ENCODE measurements at regions of chr7 and their contacts with region 1.

Region 1: GRCh38 chr7:75727881-75728592 is 10.7 kb downstream of the HIP1 start:
- DNase-seq: peak; percentile 57 to 94
- H3K4me3 ChIP-seq: no peak overlapping the region; the same call in 1 of the 2 replicates
- H3K27ac ChIP-seq: peak overlapping the region; percentile 11; the same call in 1 of the 2 replicates
- H3K4me1 ChIP-seq: peaks cover 18% of the 10 kb centered on the region
- H3K27me3 ChIP-seq: no peaks in the 10 kb centered on the region
- CTCF ChIP-seq: no peak

Region 2: DNA sequence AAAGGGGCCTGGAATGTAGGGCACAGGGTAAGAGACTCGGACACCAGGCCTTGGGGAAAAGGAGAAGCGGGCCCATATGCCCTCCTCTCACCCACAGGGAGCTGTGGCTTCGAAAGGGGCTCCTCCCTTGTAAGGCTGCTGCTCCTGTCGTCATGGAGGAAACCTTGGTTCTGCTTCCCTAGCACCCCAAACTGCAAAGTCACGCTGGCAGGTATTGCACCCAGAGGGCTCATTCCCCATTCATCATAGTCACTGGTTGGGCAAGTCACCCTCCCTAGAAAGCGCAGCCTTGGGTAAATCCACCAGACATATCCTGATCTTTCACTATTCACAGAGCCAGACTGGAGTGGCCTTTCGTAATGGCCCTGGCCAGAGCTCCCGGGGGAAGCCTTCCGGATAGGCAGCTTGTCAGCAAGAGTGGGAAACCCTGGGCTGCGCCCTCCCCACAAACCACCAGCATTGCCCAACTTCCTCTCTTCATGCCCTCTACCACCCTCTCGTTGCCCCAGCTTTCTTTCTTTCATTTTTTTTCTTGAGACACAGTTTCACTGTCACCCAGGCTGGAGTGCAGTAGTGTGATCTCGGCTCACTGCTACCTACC is 110.3 kb before region 1 on chr7:
- CTCF ChIA-PET with region 1: no interaction called
- POLR2A ChIA-PET with region 1: no interaction called
- intact Hi-C with region 1: loop called (anchors 5 kb)
- DNase-seq: peak; percentile 89 to 99
- H3K4me3 ChIP-seq: peak overlapping the region; percentile 7; the same call in 1 of the 2 replicates
- H3K27ac ChIP-seq: peak overlapping the region; percentile 96
- H3K4me1 ChIP-seq: peaks cover 27% of the 10 kb centered on the region
- H3K27me3 ChIP-seq: no peaks in the 10 kb centered on the region
- CTCF ChIP-seq: no peak

Region 3: GRCh38 chr7:75642810-75643486 is 85.1 kb before region 1 on chr7:
- CTCF ChIA-PET with region 1: no interaction called
- POLR2A ChIA-PET with region 1: interaction called, 15 read pairs
- intact Hi-C with region 1: no loop called
- DNase-seq: peak; percentile 34 to 62
- H3K4me3 ChIP-seq: no peak overlapping the region
- H3K27ac ChIP-seq: no peak overlapping the region
- H3K4me1 ChIP-seq: 0 out of 2 replicates have a peak, but pooled peaks cover 8% of the 10 kb centered on the region
- H3K27me3 ChIP-seq: no peaks in the 10 kb centered on the region
- CTCF ChIP-seq: peak; percentile 94

Region 4: DNA sequence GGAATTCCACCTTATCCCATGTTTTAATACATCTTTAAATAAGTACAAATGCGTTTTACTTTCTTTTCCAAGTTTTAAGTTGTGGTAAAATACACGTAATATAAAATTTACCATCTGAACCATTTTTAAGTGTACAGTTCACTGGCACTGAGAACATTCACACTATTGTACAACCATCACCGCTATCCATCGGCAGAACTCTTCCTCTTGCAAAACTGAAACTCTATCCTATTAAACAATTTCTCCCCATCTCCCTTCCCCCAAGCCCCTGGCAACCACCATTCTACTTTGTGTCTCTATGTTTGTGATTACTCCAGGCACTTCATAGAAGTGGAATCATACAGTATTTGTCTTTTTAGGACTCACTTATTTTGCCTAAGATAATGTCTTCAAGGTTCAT is 23.1 kb before region 1 on chr7:
- CTCF ChIA-PET with region 1: interaction called, 17 read pairs
- POLR2A ChIA-PET with region 1: no interaction called
- intact Hi-C with region 1: no loop called
- DNase-seq: no peak
- H3K4me3 ChIP-seq: no peak overlapping the region
- H3K27ac ChIP-seq: no peak overlapping the region
- H3K4me1 ChIP-seq: no peaks in the 10 kb centered on the region
- H3K27me3 ChIP-seq: no peaks in the 10 kb centered on the region
- CTCF ChIP-seq: no peak

Region 5: GRCh38 chr7:75738987-75739795 is 11.2 kb after region 1 on chr7:
- CTCF ChIA-PET with region 1: no interaction called
- POLR2A ChIA-PET with region 1: interaction called, 12 read pairs
- intact Hi-C with region 1: no loop called
- DNase-seq: peak; percentile 89 to 100
- H3K4me3 ChIP-seq: peak overlapping the region; percentile 88
- H3K27ac ChIP-seq: no peak overlapping the region
- H3K4me1 ChIP-seq: 0 out of 2 replicates have a peak, but pooled peaks cover 3% of the 10 kb centered on the region
- H3K27me3 ChIP-seq: no peaks in the 10 kb centered on the region
- CTCF ChIP-seq: no peak

Region 6: DNA sequence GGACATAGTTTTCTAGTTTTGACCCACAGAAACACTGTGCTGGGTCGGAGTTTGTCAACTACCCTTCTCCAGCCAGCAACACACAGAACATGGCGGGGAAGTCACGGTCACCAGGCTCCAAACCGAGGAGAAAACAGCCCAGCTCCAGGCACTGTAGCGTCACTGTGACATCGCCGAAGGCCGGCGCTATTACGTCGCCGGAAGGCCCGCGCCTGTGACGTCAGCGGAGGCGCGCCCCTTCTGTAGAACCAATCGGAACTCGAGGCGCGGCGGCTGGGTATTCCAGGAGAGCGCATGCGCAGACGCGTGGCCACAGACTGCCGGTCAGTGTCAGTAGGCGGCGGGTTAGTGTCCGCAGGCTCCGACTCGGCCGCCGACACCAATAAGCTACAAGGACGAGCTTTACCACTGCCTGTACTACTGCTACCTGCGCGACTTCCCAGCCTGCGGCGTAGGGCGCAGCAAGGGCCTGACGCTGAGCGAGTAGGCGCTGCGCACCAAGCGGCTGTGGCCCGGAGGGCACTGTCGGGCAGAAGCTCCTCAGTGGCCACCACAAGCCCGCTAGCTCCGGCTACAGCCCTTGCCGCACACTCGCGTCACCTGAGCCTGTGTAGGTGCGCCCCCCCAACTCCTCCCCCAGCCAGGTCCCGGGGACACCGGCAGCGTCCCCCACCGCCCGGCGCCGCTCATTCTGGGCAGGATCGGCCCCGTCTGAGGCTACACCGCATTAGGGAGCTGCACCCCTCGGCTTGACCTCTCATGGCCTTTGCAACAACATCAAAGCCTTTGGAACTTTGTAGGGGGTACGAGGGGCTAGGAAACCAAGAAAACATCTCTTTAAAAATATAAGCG is 438.6 kb after region 1 on chr7:
- CTCF ChIA-PET with region 1: no interaction called
- POLR2A ChIA-PET with region 1: no interaction called
- intact Hi-C with region 1: no loop called
- DNase-seq: peak; percentile 90 to 99
- H3K4me3 ChIP-seq: peak overlapping the region; percentile 73
- H3K27ac ChIP-seq: peak overlapping the region; percentile 75
- H3K4me1 ChIP-seq: 0 out of 2 replicates have a peak, but pooled peaks cover 4% of the 10 kb centered on the region
- H3K27me3 ChIP-seq: no peaks in the 10 kb centered on the region
- CTCF ChIP-seq: peak; percentile 30; the same call in 1 of the 2 replicates